Posterior cingulate gyrus (tissue), 11 donors: ENCODE measurements at regions of chr3 and their contacts with region 1.

Region 1: DNA sequence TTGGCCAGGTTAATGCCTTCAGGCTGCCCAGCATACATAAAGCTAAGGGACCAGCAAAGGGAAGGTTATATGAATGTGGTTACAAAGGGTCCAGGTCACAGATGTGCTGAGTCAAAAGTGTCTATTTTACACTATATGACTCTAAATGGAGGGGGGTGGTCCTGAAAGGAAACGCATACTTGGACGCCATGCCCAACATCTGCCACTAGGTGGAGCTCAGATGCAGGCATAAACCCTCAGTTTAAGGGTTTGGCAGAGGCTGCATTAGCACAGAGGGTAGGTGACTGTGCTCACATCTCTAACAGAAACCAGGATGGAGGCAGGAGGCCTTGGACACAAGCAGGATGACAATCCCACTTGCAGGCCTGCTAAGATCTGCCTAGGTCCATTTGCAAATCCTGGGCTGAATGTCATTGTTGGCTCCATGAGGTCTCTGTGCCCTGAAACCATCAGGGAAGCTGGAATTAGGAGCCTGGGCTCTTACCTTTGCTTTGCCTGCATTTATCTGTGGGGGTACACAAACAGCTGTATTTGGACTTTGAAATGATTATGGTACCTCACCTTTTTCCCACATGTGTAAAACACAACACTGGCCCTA is 55.8 kb downstream of the ZNF621 start:
- DNase-seq: peak; percentile 29 to 94 (median 72)

Region 2: GRCh38 chr3:39941931-39942330 is 638.7 kb before region 1 on chr3:
- intact Hi-C with region 1: no loop called
- DNase-seq: no peak

Region 3: DNA sequence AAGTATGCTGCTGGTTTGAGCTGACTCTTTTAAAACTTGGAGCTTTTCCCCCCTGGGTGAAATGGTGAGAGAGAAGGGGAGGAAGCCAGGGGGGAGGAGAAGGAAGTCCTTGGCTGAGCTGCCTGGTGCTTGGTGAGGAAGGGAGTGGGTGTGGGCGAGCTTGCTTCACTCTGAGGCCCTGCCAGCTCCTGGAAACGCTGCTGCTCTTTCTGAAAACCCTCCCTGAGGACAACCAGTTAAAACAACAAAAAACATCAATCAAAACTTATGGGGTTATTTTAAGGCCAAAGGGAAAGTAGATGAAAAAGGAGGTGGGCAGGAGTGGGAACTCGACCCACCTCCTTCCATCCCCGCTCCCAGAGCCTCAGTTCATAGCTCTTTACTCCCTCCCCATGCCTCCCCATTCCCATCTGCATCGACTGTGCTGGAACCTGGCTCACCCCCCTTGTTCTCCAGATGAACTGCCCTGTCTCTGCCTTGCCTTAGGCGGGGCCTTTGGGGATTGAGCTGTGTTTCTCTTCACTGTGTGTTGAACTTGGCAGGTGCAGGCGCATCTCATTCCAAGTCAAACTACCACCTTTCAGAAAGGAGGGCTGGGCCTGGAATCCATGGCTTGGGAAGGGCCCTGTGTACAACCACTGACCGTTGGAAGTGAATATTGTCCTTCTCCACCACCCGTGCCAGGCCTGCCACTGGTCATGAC is 110.3 kb after region 1 on chr3:
- intact Hi-C with region 1: loop called (anchors 10 kb)
- DNase-seq: peak in 7 of 10 donors; percentile 16 to 90 (median 55)

Region 4: DNA sequence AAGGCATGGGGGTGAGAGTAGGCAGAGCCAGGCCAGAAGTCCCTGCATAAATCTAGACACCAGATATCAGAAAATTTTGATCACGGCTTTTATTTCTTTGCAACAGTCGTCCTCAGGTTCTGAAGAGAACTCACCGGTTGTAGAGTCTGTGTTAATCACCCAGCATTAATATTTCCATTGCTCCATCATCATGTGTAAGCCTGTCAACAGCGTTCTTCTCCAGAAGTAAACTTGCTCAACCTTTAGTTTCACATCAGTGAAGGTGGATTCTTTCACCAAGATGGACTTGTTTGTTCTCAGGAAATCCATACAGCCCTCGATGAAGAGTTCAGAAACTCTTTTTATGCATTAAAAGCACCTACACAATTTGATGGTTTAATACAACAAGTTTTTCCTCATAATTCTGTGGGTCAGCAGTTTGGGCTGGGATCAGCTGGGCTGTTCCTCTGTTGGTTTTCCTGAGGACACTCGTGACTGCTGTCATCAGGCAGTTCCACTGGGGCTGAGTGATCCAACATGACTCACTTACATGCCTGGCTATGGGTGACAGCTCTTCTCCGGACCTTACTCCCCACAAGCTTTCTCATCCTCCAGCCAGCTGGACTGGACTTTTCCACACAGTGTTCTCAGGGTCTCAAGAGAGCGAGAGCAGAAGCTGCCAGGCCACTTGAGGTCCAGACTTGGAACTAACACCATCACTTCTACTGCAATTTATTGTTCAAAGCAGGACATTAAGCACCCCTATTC is 247.5 kb after region 1 on chr3:
- intact Hi-C with region 1: no loop called
- DNase-seq: no peak

Region 5: DNA sequence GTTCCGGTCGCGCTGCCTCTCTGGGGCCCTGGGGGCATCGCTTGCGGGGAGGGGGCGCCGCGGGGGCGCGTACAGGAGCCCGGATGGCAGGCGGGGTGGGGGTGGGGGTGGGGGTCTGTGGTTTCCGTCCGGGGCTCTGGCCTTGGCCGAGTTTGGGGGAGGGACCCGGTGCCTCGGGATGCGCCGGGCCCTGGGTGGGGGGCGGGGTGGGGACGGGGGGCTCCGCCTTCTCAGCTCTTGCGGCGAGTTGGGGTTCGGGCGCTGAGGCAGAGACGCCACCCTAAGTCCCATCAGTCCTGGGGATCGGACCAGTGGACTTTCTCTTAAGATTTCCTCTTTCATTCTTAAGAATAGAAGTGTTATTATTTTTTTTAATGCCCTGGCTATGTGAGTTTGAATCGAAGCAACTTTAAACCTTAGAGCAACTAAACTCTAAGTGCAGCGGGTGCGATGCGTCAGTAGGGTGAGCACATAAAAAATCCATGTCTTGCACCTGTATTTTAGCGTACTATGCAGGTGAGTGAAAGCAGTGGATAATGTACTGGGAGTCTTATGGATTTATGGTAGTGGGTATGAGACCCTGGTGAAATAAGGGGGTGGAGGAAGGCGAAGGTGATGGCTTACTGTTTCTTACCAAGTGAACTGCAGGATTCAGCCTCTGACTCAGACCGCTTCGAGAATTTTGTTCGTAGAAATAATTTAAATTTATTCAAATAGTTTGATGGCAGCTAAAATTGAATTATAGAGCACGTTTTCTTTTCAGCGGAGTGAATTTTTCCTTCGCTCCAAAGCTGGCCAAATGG is 619.5 kb after region 1 on chr3:
- intact Hi-C with region 1: loop called (anchors 5 kb)
- DNase-seq: peak in 5 of 10 donors; percentile 8 to 63 (median 14)

Region 6: GRCh38 chr3:41716471-41716870 is 1135.9 kb after region 1 on chr3:
- intact Hi-C with region 1: loop called (anchors 5 kb)
- DNase-seq: no peak

Region 7: GRCh38 chr3:41881233-41881821 is 1300.7 kb after region 1 on chr3:
- intact Hi-C with region 1: loop called (anchors 1 kb)
- DNase-seq: no peak